Left ventricle myocardium superior (tissue), 1 donor: ENCODE measurements at regions of chr11 and their contacts with region 1.

Region 1: DNA sequence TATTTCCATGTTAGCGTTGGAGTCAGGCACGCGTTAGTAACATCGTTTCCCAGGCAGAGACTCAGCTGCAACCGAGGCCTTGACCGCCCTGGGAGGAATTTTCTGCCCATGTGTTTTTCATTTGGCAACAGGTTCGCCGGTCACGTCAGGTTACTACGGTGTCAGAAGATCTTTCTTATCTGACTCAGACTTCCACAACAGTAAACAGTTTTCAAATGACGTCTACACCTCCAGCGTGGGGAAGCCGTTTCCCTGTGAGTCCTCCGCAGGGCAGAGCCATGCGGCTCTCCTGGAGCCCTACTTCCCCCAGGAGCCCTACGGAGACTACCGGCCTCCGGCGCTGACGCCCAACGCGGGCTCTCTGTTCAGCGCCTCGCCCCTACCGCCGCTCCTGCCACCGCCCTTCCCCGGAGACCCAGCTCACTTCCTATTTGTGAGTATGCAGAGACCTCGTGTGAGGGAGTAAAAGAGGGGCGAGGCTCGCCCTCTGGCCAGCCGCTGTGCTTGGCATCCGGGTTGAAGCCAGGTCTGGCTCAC is 14.3 kb upstream of the POU2AF3 start:
- DNase-seq: peak; percentile 47
- ATAC-seq: peak; percentile 57

Region 2: DNA sequence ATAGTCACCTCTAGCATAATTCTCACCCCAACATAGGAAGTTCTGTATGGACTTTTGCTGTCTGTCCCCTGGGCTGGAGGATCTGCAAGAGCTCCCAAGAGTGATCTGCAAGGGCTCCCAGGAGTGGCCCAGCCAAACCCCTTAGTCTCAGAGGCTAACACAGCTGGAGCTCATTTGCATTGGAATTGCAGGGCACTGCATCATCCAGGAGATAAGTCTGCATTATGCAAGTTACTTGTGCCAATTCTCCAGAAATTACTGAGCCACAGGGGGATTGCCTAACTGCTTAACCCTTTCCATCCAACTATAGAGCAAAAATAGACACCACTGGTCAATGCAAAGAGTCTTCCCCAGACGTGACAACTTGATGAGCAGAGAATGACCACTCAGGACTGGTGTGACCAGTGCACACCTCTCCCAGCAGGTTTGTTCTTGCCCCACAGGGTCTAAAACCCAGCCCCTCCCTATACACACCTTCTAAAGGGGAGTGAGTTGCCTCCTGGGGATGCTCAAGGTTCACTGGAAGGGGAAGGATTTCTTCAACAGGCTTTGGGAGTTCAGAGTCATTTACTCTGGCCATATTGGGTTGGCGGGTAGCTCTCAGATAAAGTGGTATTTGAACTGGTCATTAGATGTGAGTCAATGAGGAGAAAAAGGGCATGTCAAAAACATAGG is 52.7 kb after region 1 on chr11:
- intact Hi-C with region 1: no loop called
- DNase-seq: no peak
- ATAC-seq: peak; percentile 78

Region 3: GRCh38 chr11:111422494-111423249 is 138.7 kb after region 1 on chr11:
- intact Hi-C with region 1: loop called (anchors 5 kb)
- DNase-seq: peak; percentile 72
- ATAC-seq: peak; percentile 85

Region 4: GRCh38 chr11:111446404-111447111 is 162.5 kb after region 1 on chr11:
- intact Hi-C with region 1: loop called (anchors 5 kb)
- DNase-seq: peak; percentile 68
- ATAC-seq: peak; percentile 97

Region 5: DNA sequence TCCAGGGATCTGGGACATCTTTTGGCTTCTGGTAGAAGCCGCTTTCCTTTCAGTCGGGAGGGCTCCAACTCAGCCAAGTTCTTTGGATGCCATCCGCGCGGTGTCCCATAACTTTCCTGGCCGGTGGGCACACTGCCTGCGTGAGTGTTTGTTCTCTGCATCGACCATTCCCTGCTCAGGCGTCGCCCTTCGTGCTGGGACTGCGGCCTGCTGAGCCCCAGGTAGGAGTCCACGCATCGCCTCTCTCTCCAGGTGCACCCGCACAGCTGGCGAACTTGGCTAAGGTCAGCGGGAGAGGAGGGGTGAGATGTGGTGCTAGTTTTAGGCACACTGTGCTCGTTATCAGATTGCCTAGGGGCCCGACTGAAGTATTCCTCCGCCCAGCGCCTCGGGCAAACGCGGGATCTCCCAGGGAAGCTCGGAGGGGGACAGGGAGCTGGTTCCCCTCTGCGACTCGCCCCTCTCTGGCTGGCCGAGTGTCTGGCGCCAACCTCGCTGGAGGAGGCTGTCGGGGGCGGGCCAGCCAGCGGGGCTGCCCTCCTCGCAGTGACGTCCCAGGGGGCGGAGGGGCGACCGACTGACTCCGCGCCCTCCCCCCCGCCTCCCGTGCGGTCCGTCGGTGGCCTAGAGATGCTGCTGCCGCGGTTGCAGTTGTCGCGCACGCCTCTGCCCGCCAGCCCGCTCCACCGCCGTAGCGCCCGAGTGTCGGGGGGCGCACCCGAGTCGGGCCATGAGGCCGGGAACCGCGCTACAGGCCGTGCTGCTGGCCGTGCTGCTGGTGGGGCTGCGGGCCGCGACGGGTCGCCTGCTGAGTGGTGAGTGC is 256.3 kb after region 1 on chr11 and contains the start of gene LAYN:
- intact Hi-C with region 1: no loop called
- DNase-seq: peak; percentile 61
- ATAC-seq: peak; percentile 62
- total RNA-seq, gene LAYN: 3.8 TPM